ENCODE measurements at regions of chr9 and their contacts with region 1.

Region 1: DNA sequence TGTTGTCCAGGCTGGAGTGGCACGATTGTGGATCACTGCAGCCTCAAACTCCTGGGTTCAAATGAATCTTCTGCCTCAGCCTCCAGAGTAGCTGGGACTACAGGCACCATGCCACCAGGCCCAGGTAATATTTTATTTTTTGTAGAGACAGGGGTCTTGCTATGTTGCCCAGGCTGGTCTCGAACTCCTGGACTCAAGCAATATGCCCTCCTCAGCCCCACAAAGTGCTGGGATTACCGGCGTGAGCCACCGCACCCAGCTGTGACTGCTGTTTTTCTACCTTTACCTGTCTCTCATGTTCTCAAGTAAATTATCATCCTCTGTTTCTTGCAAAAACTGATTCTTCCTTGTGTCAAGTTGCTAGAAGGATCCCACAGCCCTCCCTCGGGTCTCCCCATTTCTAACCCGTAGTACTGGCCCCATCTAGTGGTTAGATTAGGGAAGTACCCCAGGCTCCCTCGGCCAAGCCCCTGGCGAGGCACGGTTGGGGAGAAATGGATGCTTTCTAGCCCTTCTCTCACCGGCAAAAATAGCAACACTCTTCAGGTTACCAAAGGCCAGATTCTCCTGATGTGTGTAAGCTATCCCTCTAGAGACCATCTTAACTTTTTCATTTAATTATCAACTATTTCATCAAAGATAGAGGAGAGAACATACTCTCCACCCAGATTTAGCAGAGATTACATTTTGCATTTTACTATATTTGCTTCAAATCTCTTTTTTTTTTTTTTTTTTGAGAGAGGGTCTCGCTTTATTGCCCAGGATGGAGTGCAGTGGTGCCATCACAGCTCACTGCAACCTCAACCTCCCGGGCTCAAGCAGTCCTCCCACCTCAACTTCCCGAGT is 19.2 kb upstream of the TOR1B start:
- DNase-seq: no peak
- H3K4me3 ChIP-seq: no peak overlapping the region
- H3K27me3 ChIP-seq: no peaks in the 10 kb centered on the region
- CTCF ChIP-seq: peak; percentile 92

Region 2: GRCh38 chr9:129258124-129258822 is 525.5 kb before region 1 on chr9:
- CTCF ChIA-PET with region 1: no interaction called
- POLR2A ChIA-PET with region 1: no interaction called
- DNase-seq: no peak
- H3K4me3 ChIP-seq: peak overlapping the region; percentile 33
- H3K27me3 ChIP-seq: no peaks in the 10 kb centered on the region; the same call in 1 of the 2 replicates
- CTCF ChIP-seq: no peak

Region 3: DNA sequence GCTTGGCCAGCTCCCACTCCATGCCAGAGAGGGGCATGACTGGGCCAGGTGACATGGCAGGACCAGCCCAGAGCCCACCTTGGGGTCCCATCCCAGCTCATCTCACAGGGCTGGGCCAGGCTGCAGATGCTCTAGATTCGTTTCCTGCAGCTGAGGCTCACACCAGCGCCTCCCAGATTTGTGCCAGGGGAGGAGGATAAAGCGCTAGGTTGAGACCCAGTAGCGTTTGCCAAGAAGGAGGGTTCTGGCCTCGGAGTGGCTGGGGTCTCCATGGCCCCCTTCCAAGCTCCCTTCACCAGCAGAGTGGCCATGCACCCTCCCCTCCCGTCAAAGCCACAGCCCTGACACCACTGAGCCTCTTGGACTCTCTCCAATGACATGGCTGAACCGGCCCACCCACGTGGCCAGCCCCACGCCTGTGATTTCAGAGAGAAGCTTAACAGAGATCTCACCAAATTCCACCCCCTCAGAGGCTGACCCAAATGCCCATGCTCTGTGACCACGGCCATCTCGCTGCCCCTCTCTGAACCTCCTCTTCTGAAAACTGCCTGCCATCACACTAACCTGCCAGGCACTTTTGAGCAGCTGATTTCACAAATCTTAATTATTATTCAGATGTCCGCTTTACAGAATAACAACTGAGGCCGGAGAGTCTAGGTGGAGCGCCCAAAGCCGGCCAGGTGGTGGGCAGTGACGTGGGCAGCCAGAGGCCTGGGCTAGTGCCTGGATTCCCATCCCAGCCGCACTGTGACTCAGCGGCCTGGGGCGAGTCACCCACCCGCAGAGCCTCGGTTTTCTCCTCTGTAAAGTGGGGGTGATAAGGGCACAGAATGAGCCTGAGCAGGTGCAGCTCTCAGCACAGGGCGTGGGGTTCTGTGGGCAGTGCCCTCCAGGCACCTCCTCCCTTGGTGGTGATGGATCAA is 318.6 kb before region 1 on chr9:
- CTCF ChIA-PET with region 1: no interaction called
- POLR2A ChIA-PET with region 1: no interaction called
- DNase-seq: no peak
- H3K4me3 ChIP-seq: no peak overlapping the region
- H3K27me3 ChIP-seq: no peaks in the 10 kb centered on the region
- CTCF ChIP-seq: no peak

Region 4: GRCh38 chr9:129626079-129626624 is 157.6 kb before region 1 on chr9 and contains the start of gene NTMT1:
- CTCF ChIA-PET with region 1: interaction called, 12 read pairs
- POLR2A ChIA-PET with region 1: no interaction called
- DNase-seq: no peak
- H3K4me3 ChIP-seq: peak within 1 kb of the TSS; percentile 88
- H3K27me3 ChIP-seq: no peaks in the 10 kb centered on the region
- CTCF ChIP-seq: no peak
- polyA plus RNA-seq, gene NTMT1: 77.1 and 96.3 TPM in 2 replicates

Region 5: DNA sequence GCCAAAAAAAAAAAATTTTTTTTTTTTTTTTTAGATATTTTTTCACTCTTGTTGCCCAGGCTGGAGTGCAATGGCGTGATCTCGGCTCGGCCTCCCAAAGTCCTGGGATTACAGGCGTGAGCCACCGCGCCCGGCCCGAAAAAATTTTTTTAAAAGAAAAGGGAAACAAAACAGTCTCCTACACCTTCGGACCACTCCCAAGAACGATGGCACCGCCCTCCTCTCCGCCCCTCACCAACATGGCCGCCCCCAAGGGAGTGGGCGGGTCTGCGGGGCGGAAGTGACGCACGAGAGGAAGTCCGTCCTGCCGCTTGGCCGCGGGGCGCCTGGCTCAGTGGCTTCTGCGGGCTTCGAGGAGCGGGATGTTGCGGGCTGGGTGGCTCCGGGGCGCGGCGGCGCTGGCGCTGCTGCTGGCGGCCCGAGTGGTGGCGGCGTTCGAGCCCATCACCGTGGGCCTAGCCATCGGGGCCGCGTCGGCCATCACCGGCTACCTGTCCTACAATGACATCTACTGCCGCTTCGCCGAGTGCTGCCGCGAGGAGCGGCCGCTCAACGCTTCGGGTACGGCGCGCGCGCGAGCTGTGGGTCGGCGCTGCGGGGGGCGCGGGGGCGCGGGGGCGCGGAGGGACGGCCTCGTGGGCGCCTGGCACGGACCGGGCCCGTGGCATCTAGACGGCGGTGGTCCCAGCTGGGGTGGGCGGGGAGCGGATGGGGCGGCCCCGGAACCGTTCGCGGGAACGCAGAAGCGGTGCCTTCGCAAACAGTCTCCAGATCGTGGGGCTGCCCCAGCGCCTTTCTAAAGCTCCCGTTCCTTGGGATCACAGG is 19.3 kb after region 1 on chr9 and contains the start of gene TOR1B:
- CTCF ChIA-PET with region 1: interaction called, 10 read pairs
- POLR2A ChIA-PET with region 1: no interaction called
- DNase-seq: peak; percentile 65
- H3K4me3 ChIP-seq: peak within 1 kb of the TSS; percentile 79
- H3K27me3 ChIP-seq: no peaks in the 10 kb centered on the region
- CTCF ChIP-seq: no peak
- polyA plus RNA-seq, gene TOR1B: 26.8 and 31.4 TPM in 2 replicates

Region 6: DNA sequence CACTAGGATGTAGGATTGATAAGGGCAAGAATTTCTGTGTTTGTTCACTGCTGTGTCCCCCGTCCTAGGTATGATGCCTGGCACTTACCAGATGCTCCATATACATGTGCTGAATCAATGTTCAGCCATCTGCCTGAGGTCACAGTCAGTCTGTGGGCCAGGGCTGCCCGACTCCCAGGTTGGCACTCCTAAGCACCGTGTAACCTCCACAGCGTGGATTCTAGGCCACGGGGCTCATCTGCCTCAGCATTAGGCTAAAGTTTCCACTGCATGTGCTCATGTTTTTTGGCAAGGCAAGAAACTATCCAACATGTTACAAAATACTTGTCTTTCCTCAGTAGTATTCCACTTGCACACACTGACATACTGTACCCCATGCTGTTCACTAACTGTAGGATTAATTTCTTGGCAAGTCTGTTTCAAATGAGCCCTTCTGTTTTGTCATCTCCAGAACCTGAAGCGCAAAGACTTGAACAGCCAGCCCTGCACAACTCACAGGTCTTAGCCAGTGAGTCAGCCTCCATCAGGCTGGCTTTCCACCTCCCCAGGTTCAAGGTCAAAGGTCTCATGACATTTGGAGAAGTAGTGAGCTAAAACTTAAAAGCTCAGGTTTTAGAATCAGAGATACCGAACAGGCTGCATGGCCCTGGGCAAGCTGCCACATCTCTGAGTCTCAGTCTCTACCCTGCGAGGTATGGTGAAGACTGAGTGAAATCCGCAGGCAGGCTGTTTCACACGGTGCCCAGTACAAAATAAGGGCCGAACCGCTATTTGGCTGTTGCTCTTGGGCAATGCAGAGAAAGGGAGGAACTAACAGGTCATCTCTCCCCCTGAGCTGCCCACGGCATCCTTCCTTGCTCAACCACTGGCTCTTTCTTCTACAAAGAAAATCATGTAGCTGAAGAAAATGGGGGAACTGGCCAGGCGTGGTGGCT is 33.0 kb after region 1 on chr9:
- CTCF ChIA-PET with region 1: no interaction called
- POLR2A ChIA-PET with region 1: no interaction called
- DNase-seq: no peak
- H3K4me3 ChIP-seq: no peak overlapping the region
- H3K27me3 ChIP-seq: no peaks in the 10 kb centered on the region
- CTCF ChIP-seq: no peak

Region 7: DNA sequence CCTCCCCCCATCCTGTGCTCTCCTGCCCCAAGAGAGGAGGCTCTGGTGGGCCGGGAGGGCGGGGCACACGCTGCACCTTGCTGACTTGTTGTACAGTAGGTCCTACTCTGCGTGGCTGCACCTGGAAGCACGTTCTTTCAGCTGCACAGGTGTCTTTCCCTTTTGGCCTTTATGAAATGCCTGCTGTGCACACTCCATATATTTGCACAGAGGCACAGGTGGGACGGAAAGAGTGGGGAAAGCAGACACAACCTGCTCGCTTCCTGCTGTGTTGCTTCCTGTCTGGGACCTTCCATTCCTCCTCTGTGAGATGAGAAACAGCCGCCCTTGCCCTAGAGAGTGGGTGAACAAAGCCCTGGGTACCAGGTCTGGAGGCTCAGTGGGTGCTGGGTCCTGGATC is 56.3 kb after region 1 on chr9:
- CTCF ChIA-PET with region 1: no interaction called
- POLR2A ChIA-PET with region 1: no interaction called
- DNase-seq: no peak
- H3K4me3 ChIP-seq: no peak overlapping the region
- H3K27me3 ChIP-seq: no peaks in the 10 kb centered on the region
- CTCF ChIP-seq: no peak